ENCODE measurements at regions of chr4 and their contacts with region 1.

Region 1: GRCh38 chr4:168388890-168389289 is 70.3 kb upstream of the DDX60 start:
- DNase-seq: peak; percentile 92
- H3K4me3 ChIP-seq: no peak overlapping the region
- H3K27ac ChIP-seq: peak overlapping the region; percentile 72
- H3K4me1 ChIP-seq: peaks cover 47% of the 10 kb centered on the region
- H3K27me3 ChIP-seq: no peaks in the 10 kb centered on the region
- CTCF ChIP-seq: no peak
- POLR2A ChIP-seq: no peak

Region 2: DNA sequence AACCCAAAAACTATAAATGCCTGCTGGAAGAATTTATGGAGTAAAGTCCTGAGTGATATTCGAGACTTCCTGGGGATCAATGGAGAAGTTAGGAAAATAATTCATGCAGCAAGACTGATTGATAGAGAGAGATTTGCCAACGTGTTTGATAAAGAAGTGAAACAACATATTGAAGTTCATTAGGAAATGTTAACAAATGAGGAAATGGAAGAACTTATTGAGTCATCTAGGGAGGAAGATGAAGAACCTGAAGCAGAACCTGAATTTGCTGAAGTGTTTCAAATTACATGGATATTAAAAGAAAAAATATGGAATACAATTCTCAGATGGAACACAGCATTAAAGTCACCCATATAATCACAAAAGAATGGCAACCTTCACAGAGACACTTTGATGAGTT is 109.3 kb before region 1 on chr4:
- CTCF ChIA-PET with region 1: no interaction called
- POLR2A ChIA-PET with region 1: no interaction called
- dilution Hi-C with region 1: no loop called
- intact Hi-C with region 1: no loop called
- DNase-seq: no peak
- H3K4me3 ChIP-seq: no peak overlapping the region
- H3K27ac ChIP-seq: no peak overlapping the region
- H3K4me1 ChIP-seq: peaks cover 3% of the 10 kb centered on the region
- H3K27me3 ChIP-seq: no peaks in the 10 kb centered on the region
- CTCF ChIP-seq: no peak
- POLR2A ChIP-seq: no peak

Region 3: GRCh38 chr4:168408620-168409019 is 19.7 kb after region 1 on chr4:
- CTCF ChIA-PET with region 1: interaction called, 3 read pairs
- POLR2A ChIA-PET with region 1: interaction called, 3 read pairs
- dilution Hi-C with region 1: no loop called
- intact Hi-C with region 1: loop called (anchors 1 kb)
- DNase-seq: peak; percentile 97
- H3K4me3 ChIP-seq: no peak overlapping the region
- H3K27ac ChIP-seq: peak overlapping the region; percentile 72
- H3K4me1 ChIP-seq: peaks cover 28% of the 10 kb centered on the region
- H3K27me3 ChIP-seq: no peaks in the 10 kb centered on the region
- CTCF ChIP-seq: no peak
- POLR2A ChIP-seq: peak; percentile 47

Region 4: DNA sequence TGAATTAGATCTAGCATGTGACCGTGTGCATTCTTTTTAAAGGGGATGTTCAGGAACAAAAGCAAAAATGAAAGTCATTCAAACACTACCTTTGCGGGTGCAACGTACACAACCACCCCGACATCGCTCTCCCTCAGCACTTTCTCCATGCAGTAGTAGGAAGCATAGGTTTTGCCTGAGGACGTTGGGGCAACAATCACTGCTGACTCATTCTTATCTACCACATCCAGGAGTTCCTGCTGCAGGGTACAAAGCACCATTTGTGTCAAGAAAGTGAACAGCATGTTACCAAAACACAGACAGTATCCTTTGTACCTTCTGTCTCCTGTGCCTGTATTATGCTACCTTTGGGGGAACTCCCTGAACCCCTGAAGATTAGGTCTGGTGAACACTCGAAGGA is 32.8 kb after region 1 on chr4:
- CTCF ChIA-PET with region 1: no interaction called
- POLR2A ChIA-PET with region 1: no interaction called
- dilution Hi-C with region 1: no loop called
- intact Hi-C with region 1: loop called (anchors 1 kb)
- DNase-seq: peak; percentile 98
- H3K4me3 ChIP-seq: no peak overlapping the region
- H3K27ac ChIP-seq: peak overlapping the region; percentile 76
- H3K4me1 ChIP-seq: peaks cover 21% of the 10 kb centered on the region
- H3K27me3 ChIP-seq: no peaks in the 10 kb centered on the region
- CTCF ChIP-seq: no peak
- POLR2A ChIP-seq: peak; percentile 69

Region 5: GRCh38 chr4:168558599-168558998 is 169.7 kb after region 1 on chr4:
- CTCF ChIA-PET with region 1: no interaction called
- POLR2A ChIA-PET with region 1: no interaction called
- dilution Hi-C with region 1: no loop called
- intact Hi-C with region 1: loop called (anchors 2 kb)
- DNase-seq: peak; percentile 95
- H3K4me3 ChIP-seq: no peak overlapping the region
- H3K27ac ChIP-seq: peak overlapping the region; percentile 69
- H3K4me1 ChIP-seq: peaks cover 47% of the 10 kb centered on the region
- H3K27me3 ChIP-seq: no peaks in the 10 kb centered on the region
- CTCF ChIP-seq: no peak
- POLR2A ChIP-seq: no peak

Measured in endothelial cell of umbilical vein (primary cell).